B cell (primary cell): ENCODE measurements at regions of chr14 and their contacts with region 1.

Region 1: DNA sequence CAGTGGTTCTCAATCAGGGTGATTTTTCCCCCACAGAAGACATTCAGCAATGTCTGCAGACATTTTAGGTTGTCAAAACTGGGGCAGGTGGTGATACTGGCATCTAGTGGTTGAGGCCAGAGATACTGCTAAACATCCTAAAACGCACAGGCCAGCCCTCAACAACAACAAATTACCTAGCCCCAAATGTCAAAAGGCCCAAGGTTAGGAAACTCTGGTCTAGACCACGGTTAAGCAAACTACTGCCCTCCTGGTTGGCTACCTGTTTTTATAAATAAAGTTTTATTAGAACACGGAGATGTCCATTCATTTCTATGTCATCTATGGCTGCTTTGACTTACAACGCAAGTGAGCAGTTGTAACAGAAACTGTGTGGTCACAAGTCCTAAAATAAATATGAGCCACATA is 186.7 kb downstream of the EFCAB11 start:
- DNase-seq: peak; percentile 83
- ATAC-seq: peak; percentile 88
- H3K4me3 ChIP-seq: peak overlapping the region in 1 of 5 experiments; percentile 23
- H3K4me3 Mint-ChIP-seq: peak overlapping the region; percentile 26
- H3K27ac ChIP-seq: peak overlapping the region in 1 of 2 donors; percentile 52
- H3K27ac Mint-ChIP-seq: peak overlapping the region; percentile 54
- H3K4me1 ChIP-seq: peaks cover 17 to 19% of the 10 kb centered on the region in 2 donors
- H3K4me1 Mint-ChIP-seq: peaks cover 29% of the 10 kb centered on the region
- H3K27me3 ChIP-seq: no peaks in the 10 kb centered on the region
- H3K27me3 Mint-ChIP-seq: no peaks in the 10 kb centered on the region
- CTCF ChIP-seq: peak; percentile 82

Region 2: GRCh38 chr14:89027097-89027740 is 740.6 kb before region 1 on chr14:
- CTCF ChIA-PET with region 1: interaction called, 9 read pairs
- POLR2A ChIA-PET with region 1: no interaction called
- intact Hi-C with region 1: loop called (anchors 1 kb)
- DNase-seq: peak; percentile 79
- ATAC-seq: peak; percentile 91
- H3K4me3 ChIP-seq: peak overlapping the region; percentile 8 to 74 (median 53)
- H3K4me3 Mint-ChIP-seq: peak overlapping the region; percentile 76
- H3K27ac ChIP-seq: no peak overlapping the region
- H3K27ac Mint-ChIP-seq: no peak overlapping the region
- H3K4me1 ChIP-seq: peaks cover 13% of the 10 kb centered on the region in 2 donors
- H3K4me1 Mint-ChIP-seq: peaks cover 4% of the 10 kb centered on the region
- H3K27me3 ChIP-seq: peaks cover 0 to 52% (median 28%) of the 10 kb centered on the region in 4 experiments
- H3K27me3 Mint-ChIP-seq: peaks cover 66% of the 10 kb centered on the region
- CTCF ChIP-seq: peak; percentile 93

Region 3: GRCh38 chr14:89178802-89179535 is 588.9 kb before region 1 on chr14:
- CTCF ChIA-PET with region 1: interaction called, 15 read pairs
- POLR2A ChIA-PET with region 1: no interaction called
- intact Hi-C with region 1: loop called (anchors 1 kb)
- DNase-seq: no peak
- ATAC-seq: no peak
- H3K4me3 ChIP-seq: no peak overlapping the region
- H3K4me3 Mint-ChIP-seq: no peak overlapping the region
- H3K27ac ChIP-seq: peak overlapping the region in 1 of 2 donors; percentile 39
- H3K27ac Mint-ChIP-seq: peak overlapping the region; percentile 33
- H3K4me1 ChIP-seq: peaks cover 7 to 11% of the 10 kb centered on the region in 2 donors
- H3K4me1 Mint-ChIP-seq: peaks cover 19% of the 10 kb centered on the region
- H3K27me3 ChIP-seq: no peaks in the 10 kb centered on the region
- H3K27me3 Mint-ChIP-seq: no peaks in the 10 kb centered on the region
- CTCF ChIP-seq: no peak

Region 4: DNA sequence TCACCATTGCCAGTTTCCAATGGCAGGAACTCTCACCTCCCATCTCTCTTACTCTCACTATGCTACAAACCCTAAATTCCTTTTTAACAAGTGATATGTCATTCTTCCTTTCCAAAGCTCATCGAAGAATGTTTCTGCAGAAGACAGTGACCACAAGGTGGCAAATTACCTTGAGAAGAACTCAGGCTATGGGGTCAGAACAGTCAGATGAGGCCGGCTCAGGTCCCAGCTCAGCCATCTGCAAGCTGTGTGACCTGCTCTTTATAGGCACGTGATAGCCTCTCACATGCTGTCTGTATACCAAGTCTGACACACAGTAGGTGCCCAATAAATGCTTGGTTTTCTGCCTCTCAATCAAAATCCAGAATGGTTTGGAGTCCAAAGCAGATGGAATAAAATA is 431.5 kb before region 1 on chr14:
- CTCF ChIA-PET with region 1: interaction called, 36 read pairs
- POLR2A ChIA-PET with region 1: no interaction called
- intact Hi-C with region 1: loop called (anchors 1 kb)
- DNase-seq: peak; percentile 69
- ATAC-seq: peak; percentile 69
- H3K4me3 ChIP-seq: no peak overlapping the region
- H3K4me3 Mint-ChIP-seq: no peak overlapping the region
- H3K27ac ChIP-seq: peak overlapping the region in 1 of 2 donors; percentile 31
- H3K27ac Mint-ChIP-seq: peak overlapping the region; percentile 62
- H3K4me1 ChIP-seq: peaks cover 39 to 42% of the 10 kb centered on the region in 2 donors
- H3K4me1 Mint-ChIP-seq: peaks cover 67% of the 10 kb centered on the region
- H3K27me3 ChIP-seq: no peaks in the 10 kb centered on the region
- H3K27me3 Mint-ChIP-seq: no peaks in the 10 kb centered on the region
- CTCF ChIP-seq: peak; percentile 52

Region 5: GRCh38 chr14:89618811-89619551 is 148.9 kb before region 1 on chr14:
- CTCF ChIA-PET with region 1: no interaction called
- POLR2A ChIA-PET with region 1: no interaction called
- intact Hi-C with region 1: loop called (anchors 1 kb)
- DNase-seq: peak; percentile 81
- ATAC-seq: peak; percentile 72
- H3K4me3 ChIP-seq: peak overlapping the region; percentile 61 to 93 (median 86)
- H3K4me3 Mint-ChIP-seq: peak overlapping the region; percentile 92
- H3K27ac ChIP-seq: peak overlapping the region in 1 of 2 donors; percentile 71
- H3K27ac Mint-ChIP-seq: peak overlapping the region; percentile 86
- H3K4me1 ChIP-seq: peaks cover 51 to 55% of the 10 kb centered on the region in 2 donors
- H3K4me1 Mint-ChIP-seq: peaks cover 66% of the 10 kb centered on the region
- H3K27me3 ChIP-seq: no peaks in the 10 kb centered on the region
- H3K27me3 Mint-ChIP-seq: no peaks in the 10 kb centered on the region
- CTCF ChIP-seq: no peak

Region 6: GRCh38 chr14:89720741-89721315 is 47.0 kb before region 1 on chr14:
- CTCF ChIA-PET with region 1: interaction called, 17 read pairs
- POLR2A ChIA-PET with region 1: no interaction called
- intact Hi-C with region 1: loop called (anchors 2 kb)
- DNase-seq: peak; percentile 91
- ATAC-seq: peak; percentile 93
- H3K4me3 ChIP-seq: peak overlapping the region in 2 of 5 experiments; percentile 26 to 40
- H3K4me3 Mint-ChIP-seq: peak overlapping the region; percentile 75
- H3K27ac ChIP-seq: peak overlapping the region; percentile 93 to 95
- H3K27ac Mint-ChIP-seq: peak overlapping the region; percentile 95
- H3K4me1 ChIP-seq: peaks cover 59 to 62% of the 10 kb centered on the region in 2 donors
- H3K4me1 Mint-ChIP-seq: peaks cover 62% of the 10 kb centered on the region
- H3K27me3 ChIP-seq: no peaks in the 10 kb centered on the region
- H3K27me3 Mint-ChIP-seq: no peaks in the 10 kb centered on the region
- CTCF ChIP-seq: no peak